ENCODE measurements at regions of chr12 and their contacts with region 1.

Region 1: DNA sequence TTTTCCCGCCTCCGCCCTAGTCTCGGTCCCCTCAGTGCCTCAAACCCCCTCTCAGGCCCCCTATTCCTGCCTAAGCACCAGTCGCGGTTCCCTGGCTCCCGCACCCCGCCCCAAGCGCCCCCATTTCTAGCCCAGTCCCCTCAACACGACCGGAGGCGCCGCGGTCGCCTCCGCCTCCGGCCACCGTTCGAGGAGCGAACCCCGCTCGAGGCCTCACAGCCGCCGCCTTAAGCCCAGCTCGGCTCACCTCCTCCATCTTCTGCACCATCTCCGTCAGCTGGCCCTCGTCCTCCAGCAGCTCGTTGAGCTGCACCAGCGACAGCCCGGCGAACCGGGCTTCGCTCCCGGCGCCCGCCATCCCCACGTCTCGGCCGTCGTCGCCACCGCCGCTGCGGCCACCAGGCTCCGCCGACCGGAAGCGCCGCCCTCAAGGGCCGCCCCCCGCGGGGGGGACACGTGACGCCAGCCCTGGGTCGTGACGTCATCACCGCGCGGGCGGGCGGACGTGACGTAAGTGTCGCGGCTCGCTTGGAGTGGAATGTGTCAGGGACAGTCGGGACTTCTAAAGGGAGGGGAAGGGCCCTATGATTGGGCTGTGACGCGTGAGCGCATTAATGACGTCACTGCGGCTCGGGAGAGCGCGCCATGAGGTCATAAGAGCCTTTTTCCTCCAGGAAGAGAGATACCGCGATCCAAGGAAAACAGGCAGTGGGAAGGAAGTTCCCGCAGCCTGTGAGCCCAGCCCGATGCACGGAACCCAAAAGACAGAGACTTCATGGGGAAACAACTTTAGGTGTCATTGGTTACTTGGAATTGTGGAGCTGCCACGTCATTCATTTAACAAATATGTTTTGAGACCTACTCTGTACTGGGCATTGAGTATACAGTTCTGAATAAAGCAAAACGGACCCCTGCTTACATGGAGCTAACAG is at the start of gene VPS37B:
- DNase-seq: peak; percentile 63 to 82
- H3K4me3 ChIP-seq: peak within 1 kb of the TSS; percentile 61
- H3K27ac ChIP-seq: peak within 1 kb of the TSS; percentile 97
- H3K4me1 ChIP-seq: peaks cover 73% of the 10 kb centered on the region
- H3K27me3 ChIP-seq: no peaks in the 10 kb centered on the region
- CTCF ChIP-seq: no peak
- total RNA-seq, gene VPS37B: 51.4 and 53.5 TPM in 2 replicates

Region 2: GRCh38 chr12:122841544-122842321 is 54.2 kb before region 1 on chr12:
- CTCF ChIA-PET with region 1: no interaction called
- POLR2A ChIA-PET with region 1: no interaction called
- intact Hi-C with region 1: loop called (anchors 2 kb)
- DNase-seq: peak; percentile 80 to 81
- H3K4me3 ChIP-seq: no peak overlapping the region
- H3K27ac ChIP-seq: peak overlapping the region; percentile 58
- H3K4me1 ChIP-seq: peaks cover 51% of the 10 kb centered on the region
- H3K27me3 ChIP-seq: no peaks in the 10 kb centered on the region
- CTCF ChIP-seq: no peak

Measured in PC-9 (cell line).